MCF 10A (cell line): ENCODE measurements at regions of chr10 and their contacts with region 1.

Region 1: DNA sequence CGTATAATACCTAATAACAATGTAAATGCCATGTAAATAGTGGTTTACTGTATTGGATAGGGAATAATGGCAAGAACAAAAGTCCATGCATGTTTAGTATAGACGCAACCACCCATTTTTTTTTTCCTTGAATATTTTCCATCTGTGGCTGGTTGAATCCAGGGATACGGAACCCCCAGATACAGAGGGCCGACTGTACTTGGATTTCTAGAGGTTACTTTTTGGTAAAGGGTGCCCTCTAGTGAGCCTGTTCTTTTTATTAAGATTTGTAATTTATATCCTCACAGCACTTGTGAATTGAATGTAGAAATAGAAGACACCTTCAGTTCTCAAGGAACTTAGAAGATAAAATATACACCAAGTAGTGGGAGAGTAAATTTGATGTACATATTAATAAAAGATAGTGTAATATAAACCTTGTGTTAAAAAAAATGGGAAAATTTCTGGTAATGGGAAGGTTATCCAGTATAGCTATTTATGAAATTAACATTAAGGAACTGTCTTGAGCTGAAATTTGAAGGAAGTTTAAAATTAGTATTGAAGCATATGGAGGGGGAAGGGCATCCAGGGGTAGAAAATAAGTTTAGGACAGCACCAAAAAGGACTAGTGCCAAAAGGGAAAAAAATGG is 32.0 kb downstream of the EXOC6 start:
- DNase-seq: peak; percentile 59
- H3K4me3 Mint-ChIP-seq: no peak overlapping the region
- H3K27ac Mint-ChIP-seq: no peak overlapping the region
- H3K4me1 Mint-ChIP-seq: no peaks in the 10 kb centered on the region
- H3K27me3 Mint-ChIP-seq: no peaks in the 10 kb centered on the region
- CTCF ChIP-seq: peak; percentile 39

Region 2: GRCh38 chr10:92517034-92517655 is 363.2 kb before region 1 on chr10:
- CTCF ChIA-PET with region 1: interaction called, 5 read pairs
- POLR2A ChIA-PET with region 1: no interaction called
- intact Hi-C with region 1: loop called (anchors 1 kb)
- DNase-seq: peak; percentile 79
- H3K4me3 Mint-ChIP-seq: no peak overlapping the region
- H3K27ac Mint-ChIP-seq: no peak overlapping the region
- H3K4me1 Mint-ChIP-seq: no peaks in the 10 kb centered on the region
- H3K27me3 Mint-ChIP-seq: no peaks in the 10 kb centered on the region
- CTCF ChIP-seq: peak; percentile 70

Region 3: GRCh38 chr10:92848441-92849233 is 31.7 kb before region 1 on chr10 and contains the start of gene EXOC6:
- CTCF ChIA-PET with region 1: interaction called, 16 read pairs
- POLR2A ChIA-PET with region 1: interaction called, 7 read pairs
- intact Hi-C with region 1: loop called (anchors 1 kb)
- DNase-seq: peak; percentile 81
- H3K4me3 Mint-ChIP-seq: peak within 1 kb of the TSS; percentile 80
- H3K27ac Mint-ChIP-seq: peak within 1 kb of the TSS; percentile 59
- H3K4me1 Mint-ChIP-seq: peaks cover 12% of the 10 kb centered on the region
- H3K27me3 Mint-ChIP-seq: no peaks in the 10 kb centered on the region
- CTCF ChIP-seq: peak; percentile 14
- total RNA-seq, gene EXOC6: 5.9 and 6.6 TPM in 2 replicates

Region 4: GRCh38 chr10:92965314-92965713 is 85.0 kb after region 1 on chr10:
- CTCF ChIA-PET with region 1: interaction called, 3 read pairs
- POLR2A ChIA-PET with region 1: no interaction called
- intact Hi-C with region 1: loop called (anchors 10 kb)
- DNase-seq: peak; percentile 53
- H3K4me3 Mint-ChIP-seq: no peak overlapping the region
- H3K27ac Mint-ChIP-seq: peak overlapping the region; percentile 9
- H3K4me1 Mint-ChIP-seq: no peaks in the 10 kb centered on the region
- H3K27me3 Mint-ChIP-seq: no peaks in the 10 kb centered on the region
- CTCF ChIP-seq: peak; percentile 57

Region 5: DNA sequence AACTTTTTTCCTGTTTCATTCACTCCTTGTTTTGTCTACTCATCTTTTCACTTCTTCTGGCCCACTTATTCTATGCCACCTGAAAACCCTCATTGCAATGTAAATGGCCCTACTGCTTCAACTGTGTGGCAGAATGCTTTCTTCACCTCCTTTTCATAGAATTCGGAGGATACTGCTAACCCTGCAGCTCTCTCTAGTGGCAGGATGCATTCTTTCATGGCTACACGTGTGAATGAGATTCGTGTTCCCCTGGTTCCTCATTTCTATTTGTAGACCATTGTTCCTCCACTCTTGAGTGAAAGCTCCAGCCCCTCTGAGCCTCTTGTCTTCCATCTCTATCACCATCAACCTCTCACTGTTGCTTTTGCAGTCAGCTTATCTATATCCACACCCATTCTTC is 159.4 kb after region 1 on chr10:
- CTCF ChIA-PET with region 1: interaction called, 8 read pairs
- POLR2A ChIA-PET with region 1: no interaction called
- intact Hi-C with region 1: loop called (anchors 1 kb)
- DNase-seq: peak; percentile 54
- H3K4me3 Mint-ChIP-seq: no peak overlapping the region
- H3K27ac Mint-ChIP-seq: no peak overlapping the region
- H3K4me1 Mint-ChIP-seq: no peaks in the 10 kb centered on the region
- H3K27me3 Mint-ChIP-seq: no peaks in the 10 kb centered on the region
- CTCF ChIP-seq: peak; percentile 65

Region 6: GRCh38 chr10:93288654-93289634 is 408.6 kb after region 1 on chr10:
- CTCF ChIA-PET with region 1: interaction called, 7 read pairs
- POLR2A ChIA-PET with region 1: no interaction called
- intact Hi-C with region 1: loop called (anchors 1 kb)
- DNase-seq: peak; percentile 86
- H3K4me3 Mint-ChIP-seq: no peak overlapping the region
- H3K27ac Mint-ChIP-seq: peak overlapping the region; percentile 40
- H3K4me1 Mint-ChIP-seq: peaks cover 5% of the 10 kb centered on the region
- H3K27me3 Mint-ChIP-seq: no peaks in the 10 kb centered on the region
- CTCF ChIP-seq: peak; percentile 77